Heart left ventricle (tissue), 16 donors: ENCODE measurements at regions of chr1 and their contacts with region 1.

Region 1: GRCh38 chr1:33295450-33296081 is 25.3 kb downstream of the A3GALT2 start:
- DNase-seq: peak; percentile 78 to 92 (median 84)
- ATAC-seq: peak; percentile 72 to 88 (median 80)
- H3K4me3 ChIP-seq: no peak overlapping the region
- H3K27ac ChIP-seq: peak overlapping the region in 5 of 12 donors; percentile 6 to 46 (median 23)
- H3K4me1 ChIP-seq: peaks cover 0 to 25% (median 11%) of the 10 kb centered on the region in 12 donors
- H3K27me3 ChIP-seq: no peaks in the 10 kb centered on the region
- CTCF ChIP-seq: peak in 11 of 12 donors; percentile 90 to 100 (median 97)
- POLR2A ChIP-seq: no peak

Region 2: GRCh38 chr1:33137800-33138199 is 157.8 kb before region 1 on chr1:
- intact Hi-C with region 1: loop called in 3 of 10 experiments (anchors 10 kb)
- DNase-seq: peak in 3 of 5 donors; percentile 42 to 64 (median 47)
- ATAC-seq: peak in 2 of 4 donors; percentile 48 to 50
- H3K4me3 ChIP-seq: no peak overlapping the region
- H3K27ac ChIP-seq: no peak overlapping the region
- H3K4me1 ChIP-seq: peaks cover 0 to 13% (median 0%) of the 10 kb centered on the region in 12 donors
- H3K27me3 ChIP-seq: no peaks in the 10 kb centered on the region
- CTCF ChIP-seq: peak; percentile 31 to 64 (median 52)
- POLR2A ChIP-seq: no peak

Region 3: DNA sequence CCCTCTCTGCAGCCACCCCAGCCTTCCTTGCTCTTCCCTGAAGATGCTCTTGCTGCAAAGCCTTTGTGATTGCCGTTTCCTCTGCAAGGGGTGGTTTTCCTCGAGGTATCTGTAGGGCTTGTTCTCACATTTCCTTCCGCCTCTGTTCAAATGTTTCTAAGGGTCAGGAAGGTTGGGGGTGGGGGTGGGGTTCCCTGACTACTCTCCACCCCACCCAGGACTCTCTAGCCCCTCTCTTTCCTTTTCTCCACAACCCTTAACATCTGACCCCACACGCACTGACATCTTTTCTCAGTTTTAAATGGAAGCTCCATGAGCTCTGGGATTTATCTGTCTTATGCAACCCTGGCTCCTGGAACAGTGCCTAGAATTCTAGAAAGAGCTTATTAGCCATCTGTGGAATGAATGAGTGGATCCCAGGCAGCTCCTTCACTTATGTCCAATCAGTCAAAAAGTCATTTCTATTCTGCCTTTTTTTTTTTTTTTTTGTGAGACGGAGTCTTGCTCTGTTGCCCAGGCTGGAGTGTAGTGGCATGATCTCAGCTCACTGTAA is 66.6 kb before region 1 on chr1:
- intact Hi-C with region 1: loop called in 3 of 10 experiments (anchors 5 to 10 kb)
- DNase-seq: peak in 4 of 5 donors; percentile 37 to 76 (median 54)
- ATAC-seq: peak; percentile 55 to 92 (median 89)
- H3K4me3 ChIP-seq: no peak overlapping the region
- H3K27ac ChIP-seq: peak overlapping the region in 5 of 12 donors; percentile 2 to 35 (median 7)
- H3K4me1 ChIP-seq: peaks cover 0 to 29% (median 9%) of the 10 kb centered on the region in 12 donors
- H3K27me3 ChIP-seq: no peaks in the 10 kb centered on the region
- CTCF ChIP-seq: no peak
- POLR2A ChIP-seq: no peak

Region 4: GRCh38 chr1:33349778-33350610 is 54.4 kb after region 1 on chr1:
- intact Hi-C with region 1: loop called in 1 of 10 experiments (anchors 5 kb)
- DNase-seq: peak; percentile 89 to 94 (median 93)
- ATAC-seq: peak; percentile 81 to 93 (median 88)
- H3K4me3 ChIP-seq: peak overlapping the region; percentile 23 to 99 (median 87)
- H3K27ac ChIP-seq: peak overlapping the region; percentile 86 to 100 (median 98)
- H3K4me1 ChIP-seq: peaks cover 5 to 51% (median 40%) of the 10 kb centered on the region in 12 donors
- H3K27me3 ChIP-seq: no peaks in the 10 kb centered on the region
- CTCF ChIP-seq: peak in 1 of 12 donors; percentile 12
- POLR2A ChIP-seq: peak in 1 of 2 donors; percentile 79

Region 5: GRCh38 chr1:33384040-33384812 is 88.7 kb after region 1 on chr1:
- intact Hi-C with region 1: no loop called
- DNase-seq: no peak
- ATAC-seq: peak in 3 of 4 donors; percentile 23 to 52 (median 32)
- H3K4me3 ChIP-seq: no peak overlapping the region
- H3K27ac ChIP-seq: peak overlapping the region in 8 of 12 donors; percentile 5 to 79 (median 61)
- H3K4me1 ChIP-seq: peaks cover 0 to 61% (median 44%) of the 10 kb centered on the region in 12 donors
- H3K27me3 ChIP-seq: no peaks in the 10 kb centered on the region
- CTCF ChIP-seq: no peak
- POLR2A ChIP-seq: no peak

Region 6: DNA sequence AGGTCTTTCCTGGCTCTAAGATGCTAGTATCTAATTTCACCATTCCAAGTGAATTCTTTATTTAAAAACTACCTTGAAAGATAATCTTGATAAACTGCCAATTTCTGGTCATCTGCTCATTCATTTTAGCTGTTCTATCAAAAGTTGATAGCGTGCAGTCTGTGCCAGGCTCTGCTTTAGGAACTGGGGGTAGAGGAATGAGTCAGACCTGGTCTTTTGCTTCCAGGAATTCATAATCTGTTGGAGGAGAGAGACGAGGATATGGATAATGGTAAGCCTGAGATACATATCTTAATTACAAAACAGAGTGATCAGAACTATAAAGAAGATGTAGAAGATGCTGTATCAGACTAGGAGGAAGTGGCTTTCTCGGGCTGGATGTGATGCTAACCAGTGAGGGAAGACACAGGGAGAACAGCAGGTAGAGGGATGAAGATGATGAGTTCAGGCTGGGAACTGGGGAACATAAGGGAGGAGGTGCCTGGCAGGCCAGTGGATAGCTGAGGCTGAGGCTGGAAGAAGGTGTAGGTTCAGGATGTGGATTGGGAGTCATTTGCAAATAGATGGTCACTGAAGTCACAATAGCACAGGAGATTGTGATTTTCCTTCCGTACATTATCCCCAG is 147.6 kb after region 1 on chr1:
- intact Hi-C with region 1: no loop called
- DNase-seq: no peak
- ATAC-seq: peak in 2 of 4 donors; percentile 8 to 44
- H3K4me3 ChIP-seq: no peak overlapping the region
- H3K27ac ChIP-seq: peak overlapping the region in 5 of 12 donors; percentile 6 to 56 (median 12)
- H3K4me1 ChIP-seq: peaks cover 3 to 30% (median 10%) of the 10 kb centered on the region in 12 donors
- H3K27me3 ChIP-seq: no peaks in the 10 kb centered on the region
- CTCF ChIP-seq: no peak
- POLR2A ChIP-seq: no peak

Region 7: GRCh38 chr1:33466159-33466558 is 170.6 kb after region 1 on chr1:
- intact Hi-C with region 1: loop called (anchors 1 to 5 kb)
- DNase-seq: peak in 4 of 5 donors; percentile 56 to 72 (median 65)
- ATAC-seq: peak in 2 of 4 donors; percentile 25 to 29
- H3K4me3 ChIP-seq: no peak overlapping the region
- H3K27ac ChIP-seq: peak overlapping the region in 2 of 12 donors; percentile 7 to 12
- H3K4me1 ChIP-seq: peaks cover 0 to 48% (median 26%) of the 10 kb centered on the region in 12 donors
- H3K27me3 ChIP-seq: no peaks in the 10 kb centered on the region
- CTCF ChIP-seq: no peak
- POLR2A ChIP-seq: no peak

Region 8: DNA sequence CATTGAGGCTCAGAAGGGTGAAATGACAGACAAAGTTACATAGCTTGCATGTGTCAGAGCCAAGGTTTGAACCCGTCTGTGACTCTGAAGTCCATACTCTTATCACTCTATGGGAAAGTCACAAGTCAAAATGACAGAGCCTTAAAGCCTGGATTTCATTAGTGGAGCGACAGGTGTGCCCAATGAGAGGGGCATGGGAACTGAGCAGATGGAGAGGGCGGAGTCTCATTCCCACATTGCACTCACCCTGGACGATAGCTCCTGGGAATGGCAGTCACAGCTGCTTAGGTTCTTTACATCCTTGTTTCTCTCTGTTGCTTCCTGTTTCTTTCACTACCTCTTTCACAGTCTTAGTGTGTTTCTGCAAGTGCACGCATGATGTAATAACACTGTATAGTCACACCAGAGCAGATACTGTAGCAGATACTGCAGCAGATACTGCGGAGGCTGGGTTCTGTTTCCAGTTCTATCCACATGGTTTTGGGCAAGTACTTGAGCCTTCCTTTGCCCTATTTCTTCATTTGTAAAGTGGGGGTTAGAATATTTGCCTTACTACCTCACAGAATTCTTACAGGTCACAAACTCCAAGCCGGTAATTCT is 304.1 kb after region 1 on chr1:
- intact Hi-C with region 1: loop called in 1 of 10 experiments (anchors 10 kb)
- DNase-seq: no peak
- ATAC-seq: no peak
- H3K4me3 ChIP-seq: no peak overlapping the region
- H3K27ac ChIP-seq: no peak overlapping the region
- H3K4me1 ChIP-seq: peaks cover 0 to under 1% (median 0%) of the 10 kb centered on the region in 12 donors
- H3K27me3 ChIP-seq: no peaks in the 10 kb centered on the region
- CTCF ChIP-seq: no peak
- POLR2A ChIP-seq: no peak

Region 9: GRCh38 chr1:33616773-33617172 is 321.2 kb after region 1 on chr1:
- intact Hi-C with region 1: loop called in 8 of 10 experiments (anchors 2 to 10 kb)
- DNase-seq: no peak
- ATAC-seq: no peak
- H3K4me3 ChIP-seq: no peak overlapping the region
- H3K27ac ChIP-seq: no peak overlapping the region
- H3K4me1 ChIP-seq: peaks cover 0 to 6% (median 0%) of the 10 kb centered on the region in 12 donors
- H3K27me3 ChIP-seq: peaks cover 0 to 13% (median 0%) of the 10 kb centered on the region in 9 donors
- CTCF ChIP-seq: no peak
- POLR2A ChIP-seq: no peak